ENCODE measurements at regions of chr7 and their contacts with region 1.

Region 1: DNA sequence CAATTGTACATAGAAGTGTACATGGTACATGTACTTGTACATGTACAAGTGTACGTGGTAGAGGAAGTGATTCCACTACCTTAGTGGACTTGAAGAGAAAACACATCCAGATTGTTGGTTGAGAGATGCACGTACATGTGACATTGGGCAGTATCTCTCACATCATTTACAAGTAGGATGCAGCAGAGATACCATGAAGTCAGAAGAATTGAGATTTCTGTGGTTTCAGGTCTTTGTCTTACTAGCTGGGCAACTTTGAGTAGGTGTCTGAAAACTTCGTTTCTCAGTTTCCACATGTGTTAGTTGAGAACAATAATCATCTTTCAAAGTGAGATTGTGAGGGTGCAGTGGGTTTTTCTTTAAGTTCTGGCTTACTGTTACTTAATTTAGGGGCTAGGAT is 21.5 kb downstream of the CLDN12 start:
- DNase-seq: no peak
- ATAC-seq: no peak
- H3K4me3 ChIP-seq: no peak overlapping the region
- H3K27ac ChIP-seq: no peak overlapping the region
- H3K4me1 ChIP-seq: no peaks in the 10 kb centered on the region
- H3K27me3 ChIP-seq: no peaks in the 10 kb centered on the region
- CTCF ChIP-seq: no peak

Region 2: DNA sequence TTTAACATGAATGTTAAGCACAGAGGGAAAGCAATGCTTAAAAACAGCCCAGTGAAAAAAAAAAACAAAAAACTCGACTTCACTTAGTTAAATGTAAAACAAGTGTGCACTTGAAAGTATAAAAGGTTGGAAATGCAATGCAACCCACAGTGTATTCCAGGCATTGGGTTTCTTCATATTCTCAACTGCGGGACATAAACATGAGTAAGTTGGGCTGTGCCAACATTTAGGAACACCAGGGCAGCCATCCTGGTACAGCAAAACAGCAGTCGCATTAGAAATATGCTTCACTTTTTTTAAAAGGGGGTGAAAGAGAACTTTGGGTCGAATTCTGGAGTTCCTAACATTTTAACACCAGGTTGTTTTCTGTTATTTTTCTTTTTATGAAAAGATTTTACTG is 269.5 kb before region 1 on chr7:
- intact Hi-C with region 1: loop called (anchors 10 kb)
- DNase-seq: no peak
- ATAC-seq: no peak
- H3K4me3 ChIP-seq: peak overlapping the region; percentile 59
- H3K27ac ChIP-seq: no peak overlapping the region
- H3K4me1 ChIP-seq: no peaks in the 10 kb centered on the region
- H3K27me3 ChIP-seq: no peaks in the 10 kb centered on the region
- CTCF ChIP-seq: no peak